Panc1 (cell line): ENCODE measurements at regions of chr9 and their contacts with region 1.

Region 1: GRCh38 chr9:19493174-19493811 is 84.5 kb downstream of the ACER2 start:
- DNase-seq: peak; percentile 45
- ATAC-seq: peak; percentile 63; the same call in 1 of the 2 replicates
- H3K4me3 ChIP-seq: no peak overlapping the region
- H3K27ac ChIP-seq: no peak overlapping the region
- H3K4me1 ChIP-seq: no peaks in the 10 kb centered on the region
- H3K27me3 ChIP-seq: no peaks in the 10 kb centered on the region
- CTCF ChIP-seq: peak; percentile 61

Region 2: GRCh38 chr9:19464764-19465585 is 28.3 kb before region 1 on chr9:
- CTCF ChIA-PET with region 1: no interaction called
- POLR2A ChIA-PET with region 1: no interaction called
- in situ Hi-C with region 1: no loop called
- intact Hi-C with region 1: no loop called
- DNase-seq: no peak
- ATAC-seq: peak; percentile 97
- H3K4me3 ChIP-seq: peak overlapping the region; percentile 27 to 33
- H3K27ac ChIP-seq: no peak overlapping the region
- H3K4me1 ChIP-seq: no peaks in the 10 kb centered on the region; the same call in 1 of the 2 replicates
- H3K27me3 ChIP-seq: no peaks in the 10 kb centered on the region
- CTCF ChIP-seq: peak; percentile 80

Region 3: GRCh38 chr9:19481971-19482404 is 11.3 kb before region 1 on chr9:
- CTCF ChIA-PET with region 1: no interaction called
- POLR2A ChIA-PET with region 1: no interaction called
- in situ Hi-C with region 1: no loop called
- intact Hi-C with region 1: no loop called
- DNase-seq: no peak
- ATAC-seq: no peak
- H3K4me3 ChIP-seq: no peak overlapping the region
- H3K27ac ChIP-seq: no peak overlapping the region
- H3K4me1 ChIP-seq: no peaks in the 10 kb centered on the region
- H3K27me3 ChIP-seq: no peaks in the 10 kb centered on the region
- CTCF ChIP-seq: no peak

Region 4: GRCh38 chr9:19521205-19521604 is 27.9 kb after region 1 on chr9:
- CTCF ChIA-PET with region 1: no interaction called
- POLR2A ChIA-PET with region 1: no interaction called
- in situ Hi-C with region 1: no loop called
- intact Hi-C with region 1: no loop called
- DNase-seq: no peak
- ATAC-seq: no peak
- H3K4me3 ChIP-seq: no peak overlapping the region
- H3K27ac ChIP-seq: no peak overlapping the region
- H3K4me1 ChIP-seq: no peaks in the 10 kb centered on the region
- H3K27me3 ChIP-seq: no peaks in the 10 kb centered on the region
- CTCF ChIP-seq: no peak

Region 5: DNA sequence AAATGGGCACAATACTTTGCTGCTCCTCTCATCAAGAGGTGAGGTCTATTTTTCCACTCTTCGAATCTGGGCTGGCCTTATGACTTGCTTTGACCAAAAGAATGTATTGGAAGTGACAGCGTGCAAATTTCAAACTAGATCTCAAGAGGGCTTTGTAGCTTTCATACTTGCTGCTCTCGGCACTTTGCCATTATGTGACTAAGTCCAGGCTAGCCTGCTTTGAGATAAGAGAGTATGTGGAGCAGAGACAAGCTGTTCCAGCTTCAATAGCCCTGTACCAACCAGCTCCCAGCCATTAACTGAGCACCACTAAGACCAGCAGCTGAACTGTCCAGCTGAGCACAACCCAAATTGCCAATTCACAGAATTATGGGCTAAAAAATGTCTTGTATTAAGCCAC is 40.1 kb after region 1 on chr9:
- CTCF ChIA-PET with region 1: no interaction called
- POLR2A ChIA-PET with region 1: no interaction called
- in situ Hi-C with region 1: no loop called
- intact Hi-C with region 1: no loop called
- DNase-seq: no peak
- ATAC-seq: no peak
- H3K4me3 ChIP-seq: no peak overlapping the region
- H3K27ac ChIP-seq: no peak overlapping the region
- H3K4me1 ChIP-seq: no peaks in the 10 kb centered on the region
- H3K27me3 ChIP-seq: no peaks in the 10 kb centered on the region
- CTCF ChIP-seq: no peak

Region 6: DNA sequence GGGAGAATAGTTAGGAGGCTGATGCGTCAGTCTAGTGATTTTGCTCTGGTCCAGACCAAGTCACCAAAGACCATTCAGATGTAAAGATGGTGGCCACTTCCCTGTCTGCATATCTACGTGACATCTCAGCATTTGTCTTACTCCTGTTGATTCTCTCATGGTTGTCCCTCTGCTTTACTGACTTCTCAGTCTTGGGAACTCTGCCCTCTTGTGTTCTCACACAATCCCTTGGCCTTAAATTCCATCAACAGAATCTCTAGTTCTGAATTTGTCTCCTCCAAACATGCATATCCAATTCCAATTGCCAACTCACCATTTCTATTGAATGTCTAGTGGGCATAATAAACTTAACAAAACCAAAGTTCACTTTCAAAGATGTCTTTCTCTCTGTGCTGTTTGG is 147.8 kb after region 1 on chr9:
- CTCF ChIA-PET with region 1: no interaction called
- POLR2A ChIA-PET with region 1: no interaction called
- in situ Hi-C with region 1: no loop called
- intact Hi-C with region 1: loop called (anchors 10 kb)
- DNase-seq: no peak
- ATAC-seq: no peak
- H3K4me3 ChIP-seq: no peak overlapping the region
- H3K27ac ChIP-seq: no peak overlapping the region
- H3K4me1 ChIP-seq: no peaks in the 10 kb centered on the region
- H3K27me3 ChIP-seq: no peaks in the 10 kb centered on the region
- CTCF ChIP-seq: no peak